Activated CD4-positive, alpha-beta T cell treated with anti-CD3 and anti-CD28 coated beads for 36 hours (primary cell): ENCODE measurements at regions of chr9 and their contacts with region 1.

Region 1: DNA sequence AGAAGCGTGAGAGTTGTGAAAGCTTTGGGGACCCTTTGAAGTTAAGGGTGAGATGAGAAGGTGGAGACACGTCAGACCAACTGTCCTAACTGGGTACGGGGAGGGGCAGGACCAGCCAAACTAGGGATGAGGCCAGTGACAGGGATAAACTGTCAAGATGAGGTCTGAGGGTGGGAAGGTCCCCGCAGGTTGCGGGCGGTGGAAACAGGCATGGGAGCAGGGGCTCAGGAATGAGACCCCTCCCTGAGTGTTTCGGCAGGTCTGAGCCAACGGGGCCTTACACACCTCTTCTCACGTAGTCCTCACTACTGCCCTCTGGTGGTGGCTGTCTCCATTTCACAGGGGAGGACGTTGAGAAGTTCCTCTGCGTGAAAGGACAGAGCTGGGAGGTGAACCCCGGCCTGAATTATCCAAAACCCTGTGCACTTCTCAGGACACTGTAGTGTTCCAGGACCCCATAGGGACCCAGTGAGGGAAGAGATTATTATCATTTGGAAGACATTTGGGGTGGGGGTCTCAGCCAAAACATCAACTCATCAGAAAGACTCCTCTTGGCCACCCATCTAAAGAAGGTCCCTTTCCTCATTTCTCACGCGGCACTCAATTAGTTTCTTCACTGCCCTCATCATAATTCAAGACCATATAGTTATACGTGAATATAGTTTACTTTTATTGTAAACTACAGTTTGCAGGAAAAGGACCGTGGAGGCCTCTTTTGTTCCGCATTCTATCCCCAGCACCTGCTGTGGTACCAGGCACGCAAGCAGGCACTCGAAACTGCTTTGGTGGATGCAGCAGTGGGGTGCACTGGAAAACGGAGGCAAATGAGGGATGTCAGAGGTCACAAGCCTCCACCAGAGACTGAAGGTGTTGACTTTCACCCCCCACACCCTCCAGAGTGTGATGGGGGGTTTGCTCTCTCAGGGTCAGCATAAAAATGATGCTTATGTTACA is 21.7 kb upstream of the NANS start:
- DNase-seq: peak; percentile 96
- ATAC-seq: peak; percentile 99
- H3K4me3 Mint-ChIP-seq: no peak overlapping the region
- H3K27ac Mint-ChIP-seq: peak overlapping the region; percentile 21
- H3K4me1 Mint-ChIP-seq: peaks cover 14% of the 10 kb centered on the region
- H3K27me3 Mint-ChIP-seq: no peaks in the 10 kb centered on the region

Region 2: DNA sequence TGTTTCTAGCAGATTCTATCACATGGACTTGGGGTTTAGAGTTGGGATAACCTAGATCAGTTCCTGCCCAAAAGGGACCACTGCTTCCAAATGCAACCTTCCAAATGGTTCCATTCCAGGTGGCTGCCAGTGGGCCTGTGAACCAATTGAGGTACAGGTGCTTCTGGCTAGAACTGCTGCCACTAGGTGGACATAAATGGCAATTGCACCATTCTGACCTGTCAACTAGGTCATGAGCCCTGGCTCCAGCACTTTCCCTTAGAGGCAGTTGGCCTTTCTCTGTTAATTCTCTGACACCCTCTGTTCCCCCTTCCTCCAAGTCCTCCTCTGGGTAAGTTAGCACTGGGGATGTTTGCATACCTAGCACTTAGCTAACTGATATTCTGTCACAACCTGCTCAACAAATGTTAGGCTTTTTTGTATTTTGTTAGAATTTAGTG is 80.3 kb before region 1 on chr9:
- CTCF ChIA-PET with region 1: interaction called, 3 read pairs
- POLR2A ChIA-PET with region 1: no interaction called
- intact Hi-C with region 1: loop called in 1 of 2 experiments (anchors 1 kb)
- DNase-seq: peak; percentile 69
- ATAC-seq: peak; percentile 90
- H3K4me3 Mint-ChIP-seq: no peak overlapping the region
- H3K27ac Mint-ChIP-seq: no peak overlapping the region
- H3K4me1 Mint-ChIP-seq: peaks cover 9% of the 10 kb centered on the region
- H3K27me3 Mint-ChIP-seq: no peaks in the 10 kb centered on the region

Region 3: DNA sequence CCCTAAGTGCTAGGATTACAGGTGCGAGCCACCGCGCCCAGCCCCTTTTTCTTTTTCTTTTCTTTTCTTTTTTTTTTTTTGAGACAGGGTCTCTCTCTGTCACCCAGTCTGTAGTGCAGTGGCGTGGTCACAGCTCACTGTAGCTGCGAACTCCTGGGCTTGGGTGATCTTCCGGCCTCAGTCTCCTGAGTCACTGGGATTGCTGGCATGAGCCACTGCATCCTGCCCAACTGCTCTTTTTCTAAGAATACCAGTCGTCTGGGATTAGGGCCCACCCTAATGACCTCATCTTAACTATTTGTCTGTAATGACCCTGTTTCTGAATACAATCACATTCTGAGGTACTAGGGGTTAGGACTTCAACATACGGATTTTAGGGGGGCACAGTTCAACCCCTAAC is 12.4 kb before region 1 on chr9:
- CTCF ChIA-PET with region 1: interaction called, 17 read pairs
- POLR2A ChIA-PET with region 1: no interaction called
- intact Hi-C with region 1: no loop called
- DNase-seq: no peak
- ATAC-seq: no peak
- H3K4me3 Mint-ChIP-seq: no peak overlapping the region
- H3K27ac Mint-ChIP-seq: no peak overlapping the region
- H3K4me1 Mint-ChIP-seq: no peaks in the 10 kb centered on the region
- H3K27me3 Mint-ChIP-seq: no peaks in the 10 kb centered on the region

Region 4: GRCh38 chr9:98045234-98046179 is 10.6 kb after region 1 on chr9:
- CTCF ChIA-PET with region 1: interaction called, 17 read pairs
- POLR2A ChIA-PET with region 1: no interaction called
- intact Hi-C with region 1: no loop called
- DNase-seq: peak; percentile 52
- ATAC-seq: peak; percentile 96
- H3K4me3 Mint-ChIP-seq: peak overlapping the region; percentile 84
- H3K27ac Mint-ChIP-seq: peak overlapping the region; percentile 95
- H3K4me1 Mint-ChIP-seq: peaks cover 31% of the 10 kb centered on the region
- H3K27me3 Mint-ChIP-seq: no peaks in the 10 kb centered on the region

Region 5: DNA sequence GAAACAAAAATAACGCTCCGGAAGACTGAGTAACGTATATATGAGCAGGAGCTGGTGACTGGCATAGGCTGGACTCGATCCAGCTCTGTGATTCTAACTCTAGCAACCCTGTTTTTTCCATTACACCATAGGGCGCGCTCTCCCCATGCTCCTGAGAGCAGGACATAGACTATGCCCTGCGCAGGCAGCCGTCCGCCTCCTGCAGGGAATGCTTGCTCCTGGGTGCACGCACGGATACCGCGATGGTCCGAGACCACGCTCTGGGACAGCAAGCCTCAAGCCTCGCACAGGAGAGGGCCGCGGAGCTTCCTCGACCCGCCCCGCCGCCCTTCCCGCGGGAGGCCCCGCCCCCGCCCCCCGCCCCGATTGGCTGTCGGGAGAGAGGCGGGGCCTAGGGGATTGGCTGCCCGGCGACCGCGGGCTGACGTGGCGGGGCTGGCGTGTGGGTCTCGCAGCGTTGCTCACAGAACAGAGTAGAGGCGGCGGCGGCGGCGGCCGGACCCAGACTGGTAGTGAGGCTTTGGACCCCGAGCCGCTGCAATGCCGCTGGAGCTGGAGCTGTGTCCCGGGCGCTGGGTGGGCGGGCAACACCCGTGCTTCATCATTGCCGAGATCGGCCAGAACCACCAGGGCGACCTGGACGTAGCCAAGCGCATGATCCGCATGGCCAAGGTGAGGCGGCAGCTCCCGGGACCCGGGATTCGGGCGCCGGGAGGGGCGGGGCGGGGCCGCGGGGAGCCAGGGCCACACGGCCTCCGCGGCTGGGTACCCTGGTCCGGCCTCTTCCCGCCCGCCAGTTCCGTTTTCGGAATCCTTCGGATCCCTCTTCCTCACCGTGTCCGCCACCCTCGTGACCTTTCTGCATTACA is 21.6 kb after region 1 on chr9 and contains the start of gene NANS:
- CTCF ChIA-PET with region 1: interaction called, 10 read pairs
- POLR2A ChIA-PET with region 1: no interaction called
- intact Hi-C with region 1: no loop called
- DNase-seq: peak; percentile 97
- ATAC-seq: peak; percentile 94
- H3K4me3 Mint-ChIP-seq: peak within 1 kb of the TSS; percentile 94
- H3K27ac Mint-ChIP-seq: peak within 1 kb of the TSS; percentile 98
- H3K4me1 Mint-ChIP-seq: peaks cover 28% of the 10 kb centered on the region
- H3K27me3 Mint-ChIP-seq: no peaks in the 10 kb centered on the region
- total RNA-seq, gene NANS: 45.9 to 47.7 TPM

Region 6: DNA sequence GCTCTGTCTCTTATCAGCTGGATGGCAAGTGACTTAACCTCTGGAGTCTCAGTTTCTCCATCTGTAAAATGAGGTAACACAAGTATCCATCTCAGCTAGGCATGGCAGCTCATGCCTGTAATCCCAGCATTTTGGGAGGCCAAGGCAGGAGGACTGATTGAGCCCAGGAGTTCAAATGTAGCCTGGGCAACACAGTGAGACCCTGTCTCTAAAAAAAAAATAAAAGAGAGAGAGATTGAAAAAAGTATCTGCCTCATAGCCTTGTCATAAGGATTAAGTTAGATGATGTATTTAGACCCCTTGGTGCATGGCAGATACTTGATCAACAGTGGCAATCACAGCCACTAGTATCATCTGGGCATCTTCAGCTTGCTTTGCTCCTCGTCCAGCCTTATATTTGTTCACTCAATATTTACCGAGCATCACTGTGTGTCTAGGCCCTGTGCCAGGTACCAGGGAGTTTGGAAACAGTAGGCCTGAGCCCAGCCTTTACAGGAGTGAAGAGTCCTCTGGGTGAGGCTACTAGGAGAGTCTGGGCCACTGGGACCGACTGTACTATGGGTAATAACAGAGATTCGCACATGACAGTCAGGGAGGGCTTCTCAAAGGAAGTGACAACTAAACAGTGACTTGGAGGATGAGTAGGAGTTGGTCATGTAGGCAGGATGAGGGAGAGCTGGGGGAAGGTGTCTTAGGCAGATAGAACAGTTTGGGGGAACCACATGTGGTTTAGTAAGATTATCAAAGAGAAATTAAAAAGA is 123.4 kb after region 1 on chr9:
- CTCF ChIA-PET with region 1: no interaction called
- POLR2A ChIA-PET with region 1: no interaction called
- intact Hi-C with region 1: no loop called
- DNase-seq: no peak
- ATAC-seq: peak; percentile 55
- H3K4me3 Mint-ChIP-seq: no peak overlapping the region
- H3K27ac Mint-ChIP-seq: peak overlapping the region; percentile 24
- H3K4me1 Mint-ChIP-seq: peaks cover 5% of the 10 kb centered on the region
- H3K27me3 Mint-ChIP-seq: no peaks in the 10 kb centered on the region

Region 7: DNA sequence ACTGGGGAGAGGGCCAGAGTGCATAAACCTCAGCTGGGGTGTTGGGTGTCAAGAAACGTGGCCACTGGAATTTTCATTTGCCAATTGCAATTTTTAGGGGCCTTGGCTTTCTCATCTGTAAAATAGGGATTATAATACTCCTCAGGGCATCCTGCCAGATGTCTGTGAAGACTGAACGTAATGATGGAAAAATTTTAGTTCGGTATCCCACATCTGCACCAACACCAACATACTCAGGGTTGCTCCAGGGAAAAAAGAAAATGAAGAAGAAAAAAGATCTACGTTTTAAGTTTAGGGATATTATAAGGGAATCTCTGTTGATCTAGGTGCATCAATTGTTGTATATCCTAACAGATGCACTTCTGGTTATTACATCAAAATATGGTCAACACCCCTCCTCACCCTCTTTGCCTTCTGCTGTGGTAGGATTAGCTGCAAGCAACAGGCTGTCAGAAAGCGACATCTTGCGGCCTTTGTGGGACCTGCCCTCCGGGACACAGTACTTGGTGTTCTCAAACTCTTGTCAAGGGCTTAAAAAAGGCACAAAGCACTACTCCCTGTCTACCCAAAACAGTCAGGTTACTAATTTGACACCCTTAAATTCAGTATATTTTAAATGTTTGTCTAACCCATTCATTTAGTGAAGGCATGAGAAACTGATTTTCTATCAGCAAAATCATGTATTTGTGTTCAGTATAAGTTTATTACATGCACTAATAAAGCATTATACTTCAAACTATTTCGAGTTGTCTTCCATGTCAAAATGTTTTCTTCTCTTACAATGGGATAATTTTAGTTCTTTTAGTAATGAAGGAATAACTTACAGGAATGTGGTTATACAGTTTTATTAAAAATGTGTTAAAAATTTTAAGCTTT is 228.8 kb after region 1 on chr9:
- CTCF ChIA-PET with region 1: interaction called, 6 read pairs
- POLR2A ChIA-PET with region 1: no interaction called
- intact Hi-C with region 1: loop called in 1 of 2 experiments (anchors 1 kb)
- DNase-seq: peak; percentile 91
- ATAC-seq: peak; percentile 99
- H3K4me3 Mint-ChIP-seq: no peak overlapping the region
- H3K27ac Mint-ChIP-seq: no peak overlapping the region
- H3K4me1 Mint-ChIP-seq: no peaks in the 10 kb centered on the region
- H3K27me3 Mint-ChIP-seq: no peaks in the 10 kb centered on the region